ENCODE measurements at regions of chr1 and their contacts with region 1.

Region 1: DNA sequence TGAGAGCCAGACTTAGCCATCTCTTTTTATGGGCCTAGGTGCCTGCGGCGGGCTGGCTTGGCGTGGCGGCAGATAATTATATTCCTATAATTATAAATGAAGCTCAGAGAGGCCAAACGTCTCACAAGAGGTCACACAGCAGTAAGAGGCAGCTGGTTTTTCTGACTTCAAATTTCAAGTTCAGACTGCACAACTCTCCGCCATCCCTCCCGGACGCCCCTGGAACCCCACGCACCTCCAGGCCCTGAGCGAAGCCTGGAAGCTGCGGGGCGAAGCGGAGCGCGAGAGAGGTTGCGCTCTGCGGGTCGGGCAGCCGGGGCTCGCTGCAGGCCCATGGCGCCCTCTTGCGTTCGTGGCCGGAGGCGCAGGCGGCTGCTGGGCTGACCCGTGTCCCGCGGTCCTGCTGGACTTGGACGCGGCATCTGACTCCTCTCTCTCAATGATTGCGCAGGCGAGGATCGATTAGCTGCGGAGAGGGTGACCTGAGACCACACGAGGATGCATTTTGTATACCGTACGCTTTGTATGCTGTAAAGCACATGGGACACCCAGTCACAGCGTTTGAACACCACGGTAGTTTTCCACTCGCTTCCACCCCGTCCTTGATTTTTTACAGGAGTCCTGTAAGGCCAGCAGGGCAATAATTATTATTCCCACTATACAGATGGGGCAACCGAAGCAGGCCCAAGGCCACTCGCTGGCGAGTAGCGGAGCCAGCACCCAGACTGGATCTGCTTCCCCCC is 272.7 kb downstream of the FOXD2 start:
- DNase-seq: peak; percentile 80
- ATAC-seq: peak; percentile 88 to 92

Region 2: DNA sequence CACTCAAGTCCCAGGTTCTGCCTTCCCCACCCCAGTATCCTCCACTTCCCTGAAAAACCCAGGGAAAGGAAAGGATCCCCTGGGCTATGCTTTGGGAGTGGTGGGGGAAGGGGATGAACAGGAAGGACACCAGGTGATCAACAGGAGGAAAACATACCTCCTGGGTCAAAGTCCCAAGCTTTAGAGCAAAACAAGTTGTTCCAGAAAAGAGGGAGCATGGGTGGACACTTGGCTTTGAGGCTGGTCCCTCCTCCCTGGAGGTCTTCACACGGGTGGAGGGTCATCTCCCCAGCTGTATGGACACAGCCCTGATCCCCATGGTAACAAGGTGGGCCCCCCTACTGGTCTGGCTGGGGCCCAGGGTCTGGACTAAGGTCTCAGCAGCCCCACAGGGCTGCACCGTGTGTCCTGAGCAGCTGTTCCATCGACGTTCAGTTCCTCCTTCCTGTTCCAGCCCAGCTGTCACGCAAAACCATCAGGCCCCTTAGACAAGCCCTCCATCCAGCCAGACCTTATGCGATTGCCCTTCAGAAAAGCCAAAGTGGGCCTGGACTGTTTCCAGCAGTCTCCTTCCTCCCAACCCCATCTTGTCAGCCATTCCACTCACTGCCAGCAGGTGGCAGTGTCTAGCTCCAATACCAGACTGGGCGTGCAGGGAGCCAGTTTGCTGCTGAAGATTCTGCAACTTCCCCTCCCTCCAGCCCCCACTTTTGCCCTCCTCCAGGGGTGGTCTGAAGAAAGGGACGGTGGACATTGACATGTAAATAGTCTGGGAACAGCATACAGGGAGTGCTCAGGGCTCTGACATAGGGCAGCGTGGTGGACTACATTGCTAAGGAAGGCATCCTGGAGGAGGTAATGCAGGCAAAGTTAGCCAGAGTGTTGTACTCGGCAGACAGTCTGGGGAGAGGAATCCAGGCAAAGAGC is 517.8 kb before region 1 on chr1:
- intact Hi-C with region 1: loop called (anchors 10 kb)
- DNase-seq: peak; percentile 83
- ATAC-seq: peak; percentile 10 to 31

Region 3: DNA sequence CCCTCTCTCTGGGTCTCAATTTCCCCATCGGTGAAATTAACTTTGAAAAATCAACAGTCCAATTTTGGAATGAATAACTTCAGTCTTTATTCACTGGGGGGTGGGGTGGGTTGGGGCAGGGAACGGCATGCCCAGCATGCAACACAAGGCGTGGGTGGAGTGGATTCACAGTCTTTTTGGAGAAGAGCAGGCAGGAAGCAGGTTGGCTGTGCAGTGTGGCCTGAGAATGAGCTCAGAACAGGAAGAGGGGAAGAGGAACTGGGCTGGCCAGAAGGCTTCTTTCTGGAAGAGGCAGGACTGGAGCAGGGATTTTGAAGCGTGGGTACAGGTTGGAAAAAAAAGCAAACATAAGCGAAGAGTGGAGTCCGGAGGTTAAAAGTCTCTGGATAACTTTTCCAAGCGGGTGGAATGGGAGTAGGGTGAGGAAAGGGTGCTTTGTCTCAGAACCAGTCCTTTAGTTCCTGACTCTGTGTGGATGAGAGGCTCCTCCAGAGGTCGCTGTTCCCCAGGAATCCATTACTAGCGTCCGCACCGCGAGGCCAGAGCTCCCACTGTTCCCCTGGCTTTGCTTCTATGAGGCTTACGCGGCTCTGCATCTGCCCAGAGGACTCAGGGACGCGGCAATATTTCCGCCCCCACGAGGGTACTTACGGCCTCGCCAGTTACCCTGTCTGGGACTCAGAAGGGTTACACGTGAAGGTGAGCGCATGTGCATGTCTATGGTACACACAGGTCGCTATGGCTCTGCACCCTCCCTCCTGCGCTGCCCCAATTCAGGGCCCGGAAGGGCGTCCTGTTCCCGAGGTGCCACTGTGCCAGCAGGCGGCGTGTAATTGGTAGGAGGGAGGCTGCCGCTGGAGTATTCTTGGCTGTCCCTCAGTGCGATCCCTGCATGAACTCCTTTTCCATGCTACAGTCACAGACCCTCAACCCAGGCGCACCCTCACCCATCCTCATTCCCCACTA is 278.1 kb before region 1 on chr1:
- intact Hi-C with region 1: loop called (anchors 2 to 5 kb)
- DNase-seq: peak; percentile 87
- ATAC-seq: peak; percentile 77 to 81

Region 4: GRCh38 chr1:47437447-47438164 is 272.9 kb before region 1 on chr1 and contains the start of gene FOXD2:
- intact Hi-C with region 1: loop called (anchors 2 to 5 kb)
- DNase-seq: peak; percentile 85
- ATAC-seq: peak; percentile 94
- total RNA-seq, gene FOXD2: 0.06 to 0.08 TPM

Region 5: GRCh38 chr1:47515164-47515789 is 195.2 kb before region 1 on chr1:
- intact Hi-C with region 1: loop called in 1 of 2 experiments (anchors 10 kb)
- DNase-seq: no peak
- ATAC-seq: no peak

Region 6: GRCh38 chr1:47527658-47528255 is 182.7 kb before region 1 on chr1:
- intact Hi-C with region 1: loop called in 1 of 2 experiments (anchors 5 kb)
- DNase-seq: no peak
- ATAC-seq: no peak

Region 7: DNA sequence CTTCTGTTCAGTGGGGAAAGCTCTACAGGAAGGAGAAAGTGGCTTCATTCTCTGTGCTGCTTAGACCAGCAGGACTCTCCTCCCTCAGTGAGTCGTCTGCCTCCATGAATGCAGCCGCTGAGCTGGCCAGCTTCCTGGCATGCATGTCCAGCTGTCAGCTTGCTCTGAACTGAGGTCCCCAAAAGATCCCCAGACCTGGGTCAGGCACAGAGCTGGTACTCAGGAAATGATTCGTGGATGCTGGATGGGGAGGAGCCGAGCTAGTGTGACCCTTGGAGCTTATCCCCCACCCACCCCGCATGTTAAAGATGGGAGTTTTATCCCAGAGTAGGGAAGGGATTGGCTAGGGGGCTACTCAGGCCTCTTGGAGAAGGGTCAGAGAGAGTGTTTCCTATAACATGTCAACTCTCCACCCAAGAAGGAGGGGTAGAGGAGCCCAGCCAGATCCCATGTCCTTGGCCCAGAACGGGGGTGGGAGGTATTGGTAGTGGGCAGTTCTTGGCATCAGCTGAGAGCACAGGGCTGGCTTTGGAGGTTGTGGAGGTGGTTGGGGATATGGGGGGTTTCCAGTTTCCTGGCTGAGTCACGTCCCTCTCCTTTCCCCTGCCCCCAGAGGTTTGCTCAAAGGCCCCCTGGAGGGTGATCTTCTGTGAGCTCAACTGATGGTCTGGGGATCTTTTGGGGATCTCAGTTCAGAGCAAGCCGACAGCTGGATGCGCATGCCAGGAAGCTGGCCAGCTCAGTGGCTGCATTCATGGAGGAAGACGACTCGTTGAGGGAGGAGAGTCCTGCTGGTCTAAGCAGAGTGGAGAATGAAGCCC is 162.5 kb before region 1 on chr1:
- intact Hi-C with region 1: no loop called
- DNase-seq: no peak
- ATAC-seq: peak; percentile 26 to 30

Measured in left cardiac atrium (tissue), 4 donors.